Activated naive CD4-positive, alpha-beta T cell treated with anti-CD3 and anti-CD28 coated beads for 36 hours (primary cell): ENCODE measurements at regions of chr6 and their contacts with region 1.

Region 1: GRCh38 chr6:8219352-8219943 is 117.1 kb upstream of the EEF1E1 start:
- DNase-seq: peak; percentile 66
- H3K4me3 Mint-ChIP-seq: no peak overlapping the region
- H3K27ac Mint-ChIP-seq: no peak overlapping the region
- H3K4me1 Mint-ChIP-seq: no peaks in the 10 kb centered on the region
- H3K27me3 Mint-ChIP-seq: peaks cover 6% of the 10 kb centered on the region

Region 2: DNA sequence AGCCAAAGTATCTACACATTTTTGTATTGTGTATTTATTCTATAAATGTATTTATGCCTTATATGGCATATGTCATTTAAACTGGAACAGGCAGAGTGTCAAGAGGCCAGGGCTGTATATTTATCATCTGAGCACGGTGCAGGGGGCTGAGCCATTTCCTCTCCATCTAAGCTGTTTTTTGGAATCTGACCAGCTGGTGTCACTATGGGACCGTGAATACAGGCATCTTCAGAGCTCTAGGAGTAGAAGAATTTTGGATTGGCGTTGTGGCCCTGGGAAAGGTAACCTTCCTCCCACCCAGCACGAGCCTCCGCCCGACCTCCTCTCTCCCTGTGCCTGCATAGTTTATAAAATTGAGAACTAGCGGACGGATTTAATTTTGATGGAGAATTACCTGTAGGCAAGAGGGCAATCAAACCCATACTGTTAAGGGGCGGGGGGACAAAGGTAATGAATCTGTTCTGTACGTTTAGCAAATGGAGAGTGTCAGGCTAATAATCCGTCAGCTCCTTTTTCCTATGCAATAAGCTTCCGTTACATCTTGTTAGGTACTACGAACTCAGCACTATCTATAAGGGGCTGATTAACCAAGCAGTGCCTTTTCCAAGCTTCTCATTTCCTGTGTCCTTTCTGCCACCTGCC is 88.1 kb before region 1 on chr6:
- CTCF ChIA-PET with region 1: interaction called, 99 read pairs
- intact Hi-C with region 1: loop called (anchors 1 kb)
- DNase-seq: peak; percentile 66
- H3K4me3 Mint-ChIP-seq: no peak overlapping the region
- H3K27ac Mint-ChIP-seq: no peak overlapping the region
- H3K4me1 Mint-ChIP-seq: no peaks in the 10 kb centered on the region
- H3K27me3 Mint-ChIP-seq: peaks cover 11% of the 10 kb centered on the region

Region 3: GRCh38 chr6:8207200-8208191 is 12.0 kb before region 1 on chr6:
- CTCF ChIA-PET with region 1: interaction called, 11 read pairs
- intact Hi-C with region 1: no loop called
- DNase-seq: no peak
- H3K4me3 Mint-ChIP-seq: no peak overlapping the region
- H3K27ac Mint-ChIP-seq: no peak overlapping the region
- H3K4me1 Mint-ChIP-seq: no peaks in the 10 kb centered on the region
- H3K27me3 Mint-ChIP-seq: peaks cover 9% of the 10 kb centered on the region

Region 4: DNA sequence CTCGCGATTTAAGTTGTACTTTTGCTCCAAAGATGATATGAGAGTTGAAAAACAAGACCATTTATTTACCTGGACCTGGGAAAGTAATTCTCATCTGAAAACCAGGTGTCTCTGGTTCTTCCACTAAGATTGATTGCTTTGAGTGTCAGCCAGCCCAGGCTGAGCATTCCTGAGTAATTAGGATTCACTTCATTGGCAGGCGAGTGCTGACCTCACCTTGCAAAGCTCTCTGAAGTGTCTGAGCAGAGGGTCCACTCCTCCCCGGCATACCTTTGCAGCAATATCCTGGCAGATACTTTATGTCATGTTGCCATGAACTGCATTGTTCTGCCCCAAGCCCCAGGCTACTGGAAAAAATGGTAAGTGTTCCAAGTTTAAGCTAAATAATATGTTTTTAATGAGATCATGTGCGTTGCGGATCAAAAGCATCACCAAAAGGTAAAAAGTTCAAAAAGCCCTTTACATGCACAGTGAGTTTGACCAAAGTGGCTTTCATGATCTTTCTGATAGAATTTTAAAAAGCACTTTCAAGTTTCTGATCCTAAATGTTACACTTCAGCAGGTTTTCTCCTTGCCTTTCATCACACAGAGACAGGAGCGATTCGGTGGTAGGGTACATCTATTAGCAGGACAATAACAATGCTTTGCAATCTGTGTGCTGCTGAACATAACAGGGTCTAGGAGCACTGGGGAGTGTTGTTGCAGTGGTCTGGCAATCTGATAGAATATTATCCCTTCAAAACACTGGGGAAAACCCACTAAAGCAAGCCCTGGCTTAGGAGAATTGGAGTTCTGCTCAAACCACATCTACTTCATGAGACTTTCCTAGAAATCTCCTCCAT is 10.7 kb after region 1 on chr6:
- CTCF ChIA-PET with region 1: interaction called, 14 read pairs
- intact Hi-C with region 1: no loop called
- DNase-seq: no peak
- H3K4me3 Mint-ChIP-seq: no peak overlapping the region
- H3K27ac Mint-ChIP-seq: no peak overlapping the region
- H3K4me1 Mint-ChIP-seq: no peaks in the 10 kb centered on the region
- H3K27me3 Mint-ChIP-seq: peaks cover 1% of the 10 kb centered on the region

Region 5: GRCh38 chr6:8269872-8270454 is 50.5 kb after region 1 on chr6:
- CTCF ChIA-PET with region 1: no interaction called
- intact Hi-C with region 1: no loop called
- DNase-seq: no peak
- H3K4me3 Mint-ChIP-seq: no peak overlapping the region
- H3K27ac Mint-ChIP-seq: no peak overlapping the region
- H3K4me1 Mint-ChIP-seq: no peaks in the 10 kb centered on the region
- H3K27me3 Mint-ChIP-seq: peaks cover 13% of the 10 kb centered on the region